ENCODE measurements at regions of chr12 and their contacts with region 1.

Region 1: DNA sequence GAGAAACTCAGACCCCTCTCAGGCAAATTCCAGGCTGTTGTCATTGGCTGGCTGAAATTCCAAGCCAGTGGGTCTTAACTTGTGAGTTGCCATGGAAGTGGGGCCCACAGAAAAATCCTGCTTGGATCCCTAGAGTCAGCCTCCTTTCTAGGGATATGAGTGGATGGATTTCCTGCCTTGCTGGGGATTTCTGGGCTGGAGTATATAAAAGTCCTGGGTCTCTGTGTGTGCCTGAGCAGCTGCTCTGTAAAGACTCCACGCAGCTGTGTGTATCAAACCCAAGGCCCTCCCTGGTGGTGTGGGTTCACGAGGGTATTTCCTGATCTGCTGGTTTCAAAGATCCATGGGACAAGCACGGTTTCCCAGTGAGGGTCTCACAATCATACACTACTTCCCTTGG is 1077.1 kb downstream of the SLC16A7 start:
- DNase-seq: no peak
- H3K4me3 ChIP-seq: no peak overlapping the region
- H3K27ac ChIP-seq: no peak overlapping the region
- H3K4me1 ChIP-seq: no peaks in the 10 kb centered on the region
- H3K27me3 ChIP-seq: no peaks in the 10 kb centered on the region
- CTCF ChIP-seq: no peak

Region 2: GRCh38 chr12:60148109-60148508 is 524.8 kb before region 1 on chr12:
- intact Hi-C with region 1: loop called (anchors 10 kb)
- DNase-seq: no peak
- H3K4me3 ChIP-seq: no peak overlapping the region
- H3K27ac ChIP-seq: no peak overlapping the region
- H3K4me1 ChIP-seq: peaks cover 0 to 36% (median 6%) of the 10 kb centered on the region in 4 donors
- H3K27me3 ChIP-seq: no peaks in the 10 kb centered on the region
- CTCF ChIP-seq: no peak

Region 3: DNA sequence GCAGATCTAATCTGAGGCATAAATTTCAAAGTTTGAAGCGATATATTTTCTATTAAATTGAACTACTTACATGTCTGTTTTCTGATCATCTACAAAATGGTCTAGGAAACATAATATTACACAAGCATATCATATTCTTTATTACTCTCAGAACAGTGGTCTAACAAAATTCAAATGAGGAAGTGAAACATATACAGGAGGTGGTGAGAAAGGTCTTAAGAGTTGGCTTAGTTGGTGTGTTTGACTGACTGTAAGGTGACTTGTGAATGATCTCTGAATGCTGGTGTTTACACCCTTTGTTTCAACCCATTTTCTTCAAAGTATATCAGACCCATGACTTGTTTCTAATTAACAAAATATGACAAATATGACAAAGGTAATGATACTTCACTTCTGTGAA is 79.6 kb after region 1 on chr12:
- intact Hi-C with region 1: no loop called
- DNase-seq: no peak
- H3K4me3 ChIP-seq: no peak overlapping the region
- H3K27ac ChIP-seq: no peak overlapping the region
- H3K4me1 ChIP-seq: no peaks in the 10 kb centered on the region
- H3K27me3 ChIP-seq: no peaks in the 10 kb centered on the region
- CTCF ChIP-seq: no peak